K562 (cell line): ENCODE measurements at regions of chr9 and their contacts with region 1.

Region 1: GRCh38 chr9:112174218-112174964 is 706 bp downstream of the SUSD1 start:
- DNase-seq: peak; percentile 86 to 93 (median 90)
- ATAC-seq: peak; percentile 80
- H3K4me3 ChIP-seq: peak overlapping the region; percentile 60
- H3K27ac ChIP-seq: peak overlapping the region; percentile 99
- H3K4me1 ChIP-seq: peaks cover 54 to 70% of the 10 kb centered on the region in 2 experiments
- H3K27me3 ChIP-seq: no peaks in the 10 kb centered on the region
- CTCF ChIP-seq: no peak
- EP300 ChIP-seq: 0 out of 2 replicates have a peak, but pooled peaks have one; percentile 23
- POLR2A ChIP-seq: peak; percentile 54; the same call in 1 of the 2 replicates
- RAD21 ChIP-seq: no peak

Region 2: GRCh38 chr9:112037281-112038016 is 136.9 kb before region 1 on chr9:
- CTCF ChIA-PET with region 1: no interaction called
- POLR2A ChIA-PET with region 1: no interaction called
- in situ Hi-C with region 1: no loop called
- intact Hi-C with region 1: no loop called
- DNase-seq: no peak
- ATAC-seq: no peak
- H3K4me3 ChIP-seq: no peak overlapping the region
- H3K27ac ChIP-seq: 0 out of 3 replicates have a peak overlapping the region, but pooled peaks have one; percentile 29
- H3K4me1 ChIP-seq: peaks cover 7 to 11% of the 10 kb centered on the region in 2 experiments; a peak in 3 of 5 replicates
- H3K27me3 ChIP-seq: no peaks in the 10 kb centered on the region
- CTCF ChIP-seq: no peak
- EP300 ChIP-seq: no peak
- POLR2A ChIP-seq: no peak
- RAD21 ChIP-seq: no peak

Region 3: DNA sequence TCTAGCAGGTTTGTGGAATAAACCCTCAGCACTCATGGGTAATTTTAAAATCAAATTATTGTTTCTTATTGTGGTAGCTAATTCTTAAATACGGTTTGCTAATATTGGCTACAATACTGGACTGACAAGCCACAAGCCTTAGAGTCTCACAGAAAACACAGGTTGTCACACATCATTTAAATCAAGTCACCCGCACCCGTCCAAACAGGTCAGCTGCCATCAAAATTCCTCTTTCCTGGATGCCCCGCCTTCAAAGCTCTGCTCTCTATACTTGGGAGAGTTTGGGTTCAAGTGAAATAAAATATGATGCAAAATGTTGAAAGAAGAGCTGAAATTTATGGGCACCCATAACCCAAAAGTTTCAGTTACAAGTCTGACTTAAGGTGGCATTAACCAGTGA is 13.0 kb after region 1 on chr9:
- CTCF ChIA-PET with region 1: no interaction called
- POLR2A ChIA-PET with region 1: interaction called, 20 read pairs
- in situ Hi-C with region 1: no loop called
- intact Hi-C with region 1: no loop called
- DNase-seq: no peak
- ATAC-seq: no peak
- H3K4me3 ChIP-seq: no peak overlapping the region
- H3K27ac ChIP-seq: no peak overlapping the region
- H3K4me1 ChIP-seq: peaks cover 0 to 5% of the 10 kb centered on the region in 2 experiments; a peak in 3 of 5 replicates
- H3K27me3 ChIP-seq: no peaks in the 10 kb centered on the region
- CTCF ChIP-seq: no peak
- EP300 ChIP-seq: no peak
- POLR2A ChIP-seq: no peak
- RAD21 ChIP-seq: no peak

Region 4: DNA sequence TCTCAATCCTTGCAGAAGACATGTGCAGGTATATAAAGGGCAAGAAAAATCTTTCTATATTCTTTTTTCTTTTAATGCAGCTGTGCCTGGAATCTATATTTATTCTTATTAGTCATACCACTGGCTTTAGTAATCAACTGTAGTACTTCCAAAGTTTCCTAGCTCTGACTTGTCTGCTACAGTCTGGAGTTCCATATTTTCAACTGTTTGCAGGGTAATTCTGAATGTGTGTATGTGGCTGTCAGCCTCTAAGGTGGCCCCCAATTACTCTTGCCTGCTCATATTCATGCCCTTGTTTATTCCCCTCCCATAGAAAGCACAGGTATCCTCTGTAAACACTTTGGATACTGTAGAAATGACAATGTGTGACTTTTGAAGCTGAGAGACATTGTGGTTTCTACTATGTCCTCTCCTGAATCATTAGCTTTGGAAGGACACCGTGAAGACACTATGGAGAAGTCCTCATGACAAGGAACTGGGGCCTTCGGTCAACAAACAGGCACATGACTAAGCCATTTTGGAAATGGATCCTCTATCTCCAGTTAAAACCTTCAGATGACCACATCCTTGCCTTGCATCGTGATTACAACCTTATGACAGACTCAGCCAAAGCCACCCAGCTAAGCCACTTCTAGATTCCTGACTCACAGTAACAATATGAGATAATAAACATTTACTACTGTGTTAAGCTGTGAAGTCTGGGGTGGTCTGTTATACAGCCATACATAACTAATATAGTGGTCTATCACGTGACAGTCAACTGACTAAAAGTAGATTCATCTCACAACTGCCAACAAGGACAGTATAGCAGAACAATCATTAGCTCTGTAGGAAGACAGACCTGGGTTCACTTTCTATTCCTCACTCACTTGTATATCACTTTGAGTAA is 50.3 kb after region 1 on chr9:
- CTCF ChIA-PET with region 1: no interaction called
- POLR2A ChIA-PET with region 1: no interaction called
- in situ Hi-C with region 1: no loop called
- intact Hi-C with region 1: loop called (anchors 5 kb)
- DNase-seq: peak in 2 of 4 experiments; percentile 65 to 86
- ATAC-seq: peak; percentile 93
- H3K4me3 ChIP-seq: no peak overlapping the region
- H3K27ac ChIP-seq: peak overlapping the region; percentile 91
- H3K4me1 ChIP-seq: peaks cover 0 to 18% of the 10 kb centered on the region in 2 experiments; a peak in 3 of 5 replicates
- H3K27me3 ChIP-seq: no peaks in the 10 kb centered on the region
- CTCF ChIP-seq: no peak
- EP300 ChIP-seq: peak; percentile 82
- POLR2A ChIP-seq: no peak
- RAD21 ChIP-seq: peak in 1 of 2 experiments; percentile 39; a peak in 1 of 4 replicates

Region 5: DNA sequence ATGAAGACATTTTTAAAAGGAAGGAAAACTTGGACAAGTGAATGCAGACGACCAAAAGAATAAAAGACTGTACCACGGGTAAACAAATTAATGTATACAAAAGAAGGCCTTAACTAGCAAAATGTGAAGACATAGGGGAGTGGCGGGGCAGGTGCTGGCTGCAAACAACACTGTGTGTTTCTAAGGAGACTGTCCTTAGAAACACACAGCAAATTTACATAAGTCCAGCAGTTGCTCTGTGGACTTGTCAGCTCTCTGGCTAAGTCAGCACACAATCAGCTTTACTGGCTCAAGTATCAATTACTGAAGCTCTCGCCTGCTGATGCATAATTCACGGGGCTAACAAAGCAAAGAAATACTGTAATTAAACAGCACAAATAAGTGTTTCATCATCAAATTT is 134.2 kb after region 1 on chr9:
- CTCF ChIA-PET with region 1: no interaction called
- POLR2A ChIA-PET with region 1: no interaction called
- in situ Hi-C with region 1: no loop called
- intact Hi-C with region 1: loop called (anchors 5 kb)
- DNase-seq: no peak
- ATAC-seq: peak; percentile 30
- H3K4me3 ChIP-seq: no peak overlapping the region
- H3K27ac ChIP-seq: no peak overlapping the region
- H3K4me1 ChIP-seq: peaks cover 13 to 21% of the 10 kb centered on the region in 2 experiments; a peak in 3 of 5 replicates
- H3K27me3 ChIP-seq: no peaks in the 10 kb centered on the region
- CTCF ChIP-seq: no peak
- EP300 ChIP-seq: no peak
- POLR2A ChIP-seq: no peak
- RAD21 ChIP-seq: no peak